ENCODE measurements at regions of chr7 and their contacts with region 1.

Region 1: DNA sequence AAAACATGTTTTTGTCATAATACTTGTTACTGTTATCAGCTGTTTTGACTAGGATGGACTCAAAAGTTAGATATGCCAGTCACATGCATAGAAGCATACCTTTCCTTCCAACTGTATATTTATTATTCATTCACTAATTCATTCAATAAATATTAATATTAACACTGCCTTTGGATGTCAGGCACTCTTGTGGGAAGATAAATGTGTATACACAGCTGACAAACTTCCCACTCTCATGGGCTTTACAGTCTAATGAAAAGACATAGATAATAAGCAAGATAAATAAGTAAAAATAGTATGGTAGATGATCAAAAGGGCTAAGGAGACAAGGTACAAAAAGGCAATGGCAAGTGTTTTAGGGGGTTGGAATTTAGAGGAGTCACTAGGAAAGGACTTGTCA is 180.1 kb upstream of the SMIM30 start:
- DNase-seq: no peak
- H3K4me3 Mint-ChIP-seq: no peak overlapping the region
- H3K27ac Mint-ChIP-seq: no peak overlapping the region
- H3K4me1 Mint-ChIP-seq: no peaks in the 10 kb centered on the region
- H3K27me3 Mint-ChIP-seq: peaks cover 5% of the 10 kb centered on the region

Region 2: DNA sequence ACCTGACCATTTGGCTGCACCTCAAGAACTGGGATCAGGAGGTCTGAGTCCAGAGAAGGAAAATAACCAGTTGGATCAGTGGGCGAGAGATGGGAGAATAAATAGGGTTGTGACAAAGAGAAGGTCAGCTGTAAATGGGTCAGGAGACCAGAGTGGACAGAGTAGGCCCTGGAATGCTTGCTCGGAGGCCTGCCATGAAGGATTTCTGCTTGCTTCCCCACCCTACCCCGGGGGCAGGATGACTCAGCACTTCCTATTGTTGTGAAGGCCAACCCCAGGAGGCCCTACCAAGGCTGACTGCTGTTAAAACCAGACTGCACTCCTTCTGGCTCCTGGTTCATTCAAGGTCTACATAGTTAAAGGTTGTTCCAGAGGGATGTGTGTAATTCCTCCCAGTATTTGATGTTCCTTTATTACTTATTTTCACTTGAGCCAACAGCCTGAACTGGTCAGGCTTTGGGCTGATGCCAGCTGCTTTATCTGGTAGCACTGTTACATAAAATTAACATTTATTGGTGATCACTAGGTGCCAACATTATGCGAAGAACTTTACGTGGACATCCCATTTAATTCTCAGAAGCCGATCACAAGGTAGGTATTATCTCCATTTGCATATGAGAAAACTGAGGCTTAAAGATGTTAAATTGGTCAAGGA is 875.5 kb before region 1 on chr7:
- intact Hi-C with region 1: no loop called
- DNase-seq: no peak
- H3K4me3 Mint-ChIP-seq: no peak overlapping the region
- H3K27ac Mint-ChIP-seq: peak overlapping the region; percentile 37
- H3K4me1 Mint-ChIP-seq: peaks cover 22% of the 10 kb centered on the region
- H3K27me3 Mint-ChIP-seq: no peaks in the 10 kb centered on the region

Region 3: GRCh38 chr7:113283861-113284260 is 14.6 kb before region 1 on chr7:
- intact Hi-C with region 1: loop called (anchors 2 kb)
- DNase-seq: no peak
- H3K4me3 Mint-ChIP-seq: no peak overlapping the region
- H3K27ac Mint-ChIP-seq: no peak overlapping the region
- H3K4me1 Mint-ChIP-seq: no peaks in the 10 kb centered on the region
- H3K27me3 Mint-ChIP-seq: peaks cover 8% of the 10 kb centered on the region

Region 4: DNA sequence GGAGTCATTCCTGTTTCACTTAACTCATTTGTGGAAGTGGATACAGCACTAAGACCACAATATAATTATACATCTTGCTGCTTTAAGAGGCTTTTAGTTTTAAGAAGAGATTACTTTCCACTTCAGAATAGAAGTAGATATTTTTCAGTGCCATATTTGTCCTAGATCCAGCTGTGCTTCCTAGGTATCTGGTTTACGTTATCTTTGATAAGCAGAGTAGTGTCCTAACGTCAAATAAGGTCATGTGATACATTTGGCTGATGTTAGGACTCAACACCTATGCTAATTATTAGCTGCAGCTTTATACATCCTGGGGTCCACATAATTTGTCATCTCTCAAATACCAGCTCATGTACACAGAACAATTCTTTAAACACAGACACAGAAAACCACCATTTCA is 16.1 kb after region 1 on chr7:
- intact Hi-C with region 1: no loop called
- DNase-seq: no peak
- H3K4me3 Mint-ChIP-seq: no peak overlapping the region
- H3K27ac Mint-ChIP-seq: no peak overlapping the region
- H3K4me1 Mint-ChIP-seq: no peaks in the 10 kb centered on the region
- H3K27me3 Mint-ChIP-seq: no peaks in the 10 kb centered on the region

Region 5: DNA sequence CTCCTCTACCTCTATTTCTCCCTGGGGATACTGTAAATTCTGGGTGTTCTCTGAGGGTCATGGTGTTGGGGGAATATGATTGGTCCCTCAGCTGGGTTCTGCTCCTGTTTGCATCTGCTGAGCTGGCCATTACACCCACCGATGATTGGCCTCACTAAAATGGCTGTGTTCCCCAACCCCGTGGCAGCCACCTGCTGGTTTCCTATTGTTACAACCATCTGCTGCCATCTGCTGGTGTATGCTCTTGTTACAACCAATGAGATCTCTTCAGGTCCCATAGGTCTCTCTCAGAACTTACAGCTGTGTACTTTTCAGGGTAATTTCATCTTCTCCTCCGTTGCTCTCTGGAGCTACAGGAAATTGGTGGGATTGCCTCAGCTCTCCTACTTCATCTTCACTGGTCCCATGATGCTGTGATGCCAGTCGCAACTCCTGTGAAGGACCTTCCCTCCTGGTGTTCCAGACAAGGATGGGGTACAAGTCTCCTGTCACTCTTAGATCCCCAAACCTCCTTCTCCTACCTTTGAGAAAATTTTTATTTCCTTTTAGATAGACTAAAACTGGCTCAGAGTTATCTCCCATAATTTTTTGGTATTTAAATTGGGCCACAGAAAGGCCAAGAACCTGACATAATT is 123.3 kb after region 1 on chr7:
- intact Hi-C with region 1: no loop called
- DNase-seq: peak; percentile 60
- H3K4me3 Mint-ChIP-seq: no peak overlapping the region
- H3K27ac Mint-ChIP-seq: no peak overlapping the region
- H3K4me1 Mint-ChIP-seq: peaks cover 4% of the 10 kb centered on the region
- H3K27me3 Mint-ChIP-seq: peaks cover 2% of the 10 kb centered on the region

Region 6: GRCh38 chr7:114269714-114270113 is 971.2 kb after region 1 on chr7:
- intact Hi-C with region 1: no loop called
- DNase-seq: no peak
- H3K4me3 Mint-ChIP-seq: no peak overlapping the region
- H3K27ac Mint-ChIP-seq: no peak overlapping the region
- H3K4me1 Mint-ChIP-seq: no peaks in the 10 kb centered on the region
- H3K27me3 Mint-ChIP-seq: no peaks in the 10 kb centered on the region